Activated CD4-positive, alpha-beta memory T cell treated with anti-CD3 and anti-CD28 coated beads, Interleukin-2, amount 10 ng/mL, durations not matched to agents 7 days and 5 days (primary cell): ENCODE measurements at regions of chr14 and their contacts with region 1.

Region 1: GRCh38 chr14:61694830-61695694 is at the start of gene HIF1A:
- DNase-seq: peak; percentile 97
- H3K4me3 Mint-ChIP-seq: peak within 1 kb of the TSS; percentile 95
- H3K27ac Mint-ChIP-seq: peak within 1 kb of the TSS; percentile 93
- H3K4me1 Mint-ChIP-seq: peaks cover 54% of the 10 kb centered on the region
- H3K27me3 Mint-ChIP-seq: no peaks in the 10 kb centered on the region
- total RNA-seq, gene HIF1A: 153 to 158 TPM

Region 2: GRCh38 chr14:61656341-61656740 is 38.7 kb before region 1 on chr14:
- CTCF ChIA-PET with region 1: interaction called, 3 read pairs
- POLR2A ChIA-PET with region 1: interaction called, 88 read pairs
- DNase-seq: no peak
- H3K4me3 Mint-ChIP-seq: no peak overlapping the region
- H3K27ac Mint-ChIP-seq: peak overlapping the region; percentile 45
- H3K4me1 Mint-ChIP-seq: peaks cover 63% of the 10 kb centered on the region
- H3K27me3 Mint-ChIP-seq: peaks cover 9% of the 10 kb centered on the region

Region 3: GRCh38 chr14:61662437-61663311 is 32.4 kb before region 1 on chr14:
- CTCF ChIA-PET with region 1: interaction called, 4 read pairs
- POLR2A ChIA-PET with region 1: interaction called, 88 read pairs
- DNase-seq: peak; percentile 79
- H3K4me3 Mint-ChIP-seq: peak overlapping the region; percentile 70
- H3K27ac Mint-ChIP-seq: peak overlapping the region; percentile 98
- H3K4me1 Mint-ChIP-seq: peaks cover 79% of the 10 kb centered on the region
- H3K27me3 Mint-ChIP-seq: no peaks in the 10 kb centered on the region

Region 4: DNA sequence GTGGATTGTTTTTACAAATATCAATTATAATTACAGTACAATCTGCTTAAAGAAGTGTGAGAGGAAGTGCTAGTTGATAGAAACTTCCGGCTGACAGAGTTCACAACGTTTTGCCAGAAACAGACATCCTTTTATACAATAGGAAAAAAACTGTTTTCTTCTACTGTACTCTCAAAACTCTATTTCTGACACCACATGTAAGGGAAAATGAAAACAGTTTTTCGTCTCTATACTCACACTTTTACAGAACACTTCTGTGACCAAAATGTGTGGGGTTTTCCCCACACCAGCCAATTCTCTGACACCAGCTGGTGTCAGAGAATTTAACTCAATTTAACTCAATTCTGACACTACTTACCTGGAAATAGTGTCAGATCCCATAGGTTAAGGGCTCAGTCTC is 24.0 kb before region 1 on chr14:
- CTCF ChIA-PET with region 1: interaction called, 3 read pairs
- POLR2A ChIA-PET with region 1: interaction called, 11 read pairs
- DNase-seq: peak; percentile 33
- H3K4me3 Mint-ChIP-seq: peak overlapping the region; percentile 34
- H3K27ac Mint-ChIP-seq: no peak overlapping the region
- H3K4me1 Mint-ChIP-seq: peaks cover 13% of the 10 kb centered on the region
- H3K27me3 Mint-ChIP-seq: no peaks in the 10 kb centered on the region

Region 5: GRCh38 chr14:61719344-61720293 is 24.6 kb after region 1 on chr14:
- CTCF ChIA-PET with region 1: no interaction called
- POLR2A ChIA-PET with region 1: interaction called, 13 read pairs
- DNase-seq: no peak
- H3K4me3 Mint-ChIP-seq: no peak overlapping the region
- H3K27ac Mint-ChIP-seq: peak overlapping the region; percentile 40
- H3K4me1 Mint-ChIP-seq: peaks cover 67% of the 10 kb centered on the region
- H3K27me3 Mint-ChIP-seq: no peaks in the 10 kb centered on the region